Breast epithelium (tissue), 4 donors: ENCODE measurements at regions of chr20 and their contacts with region 1.

Region 1: DNA sequence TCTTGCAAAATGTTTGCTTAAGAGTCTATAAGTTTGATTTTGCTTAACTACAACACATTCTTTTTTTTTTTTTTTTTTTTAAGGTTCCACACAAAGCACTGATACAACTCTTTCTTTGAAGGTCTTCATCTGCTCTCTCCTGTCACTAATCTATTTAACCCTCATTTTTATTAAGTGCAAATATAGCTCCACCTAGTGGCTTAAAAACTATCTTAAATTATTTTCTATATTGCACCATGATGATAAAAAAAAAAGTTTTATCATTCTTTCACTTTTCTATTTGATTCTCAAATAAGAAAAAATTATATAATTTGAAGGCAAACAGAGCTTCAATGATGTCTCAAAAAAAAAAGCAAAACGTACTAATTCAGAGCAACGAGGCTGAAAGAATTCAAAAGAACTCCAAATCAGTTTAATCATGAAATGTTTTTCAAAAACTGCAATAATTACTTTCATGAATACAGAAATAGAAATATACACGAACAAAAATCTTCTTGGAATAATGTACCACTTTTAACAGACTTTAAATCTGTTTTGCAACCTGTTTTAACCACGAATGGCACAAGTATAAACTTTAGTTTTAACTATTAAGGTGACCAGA is 12.8 kb downstream of the ESF1 start:
- DNase-seq: no peak
- H3K4me3 ChIP-seq: no peak overlapping the region
- H3K27ac ChIP-seq: no peak overlapping the region
- H3K4me1 ChIP-seq: no peaks in the 10 kb centered on the region
- H3K27me3 ChIP-seq: no peaks in the 10 kb centered on the region
- CTCF ChIP-seq: peak in 2 of 3 donors; percentile 39 to 41
- POLR2A ChIP-seq: no peak

Region 2: GRCh38 chr20:13119583-13119982 is 652.4 kb before region 1 on chr20:
- intact Hi-C with region 1: loop called (anchors 10 kb)
- DNase-seq: peak in 1 of 2 donors; percentile 24
- H3K4me3 ChIP-seq: no peak overlapping the region
- H3K27ac ChIP-seq: no peak overlapping the region
- H3K4me1 ChIP-seq: no peaks in the 10 kb centered on the region
- H3K27me3 ChIP-seq: no peaks in the 10 kb centered on the region
- CTCF ChIP-seq: peak; percentile 84 to 93 (median 91)
- POLR2A ChIP-seq: no peak

Region 3: DNA sequence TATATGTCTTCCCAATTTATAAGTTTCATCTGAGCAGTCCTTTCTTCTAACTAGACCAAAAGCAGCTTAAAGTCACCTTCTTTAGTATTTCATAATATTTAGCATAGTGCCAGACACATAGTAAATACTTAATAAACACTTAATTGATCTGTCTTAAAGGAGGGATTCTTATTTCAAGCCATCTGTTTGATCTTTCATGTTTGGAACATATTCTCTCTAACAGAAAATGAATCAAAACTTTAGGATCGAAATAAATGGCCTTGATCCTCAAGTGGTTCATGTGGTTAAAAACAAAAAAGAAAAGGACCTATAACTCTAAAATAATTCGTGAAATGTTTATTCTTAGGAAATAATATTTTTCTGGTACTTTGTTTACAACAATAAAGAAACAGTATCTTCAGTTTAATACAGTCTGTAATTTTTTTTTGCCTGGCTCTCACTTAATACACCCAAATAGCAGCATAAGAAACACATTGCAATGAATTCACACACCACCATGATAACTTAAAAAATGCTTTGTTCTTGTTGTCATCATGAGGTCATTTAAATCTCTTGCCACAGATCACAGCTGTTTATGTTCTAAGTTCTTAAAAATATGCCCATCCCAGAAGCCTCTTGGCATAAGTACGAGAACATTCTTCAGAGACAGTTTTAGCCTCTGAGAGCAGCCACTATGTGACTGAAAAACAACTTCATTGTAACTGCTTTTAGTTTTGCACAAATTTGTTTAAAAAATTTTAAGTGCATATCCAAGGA is 35.3 kb before region 1 on chr20:
- intact Hi-C with region 1: loop called (anchors 2 kb)
- DNase-seq: no peak
- H3K4me3 ChIP-seq: no peak overlapping the region
- H3K27ac ChIP-seq: peak overlapping the region; percentile 9 to 10
- H3K4me1 ChIP-seq: no peaks in the 10 kb centered on the region
- H3K27me3 ChIP-seq: no peaks in the 10 kb centered on the region
- CTCF ChIP-seq: no peak
- POLR2A ChIP-seq: no peak

Region 4: GRCh38 chr20:13755809-13756208 is 16.1 kb before region 1 on chr20:
- intact Hi-C with region 1: no loop called
- DNase-seq: no peak
- H3K4me3 ChIP-seq: no peak overlapping the region
- H3K27ac ChIP-seq: no peak overlapping the region
- H3K4me1 ChIP-seq: no peaks in the 10 kb centered on the region
- H3K27me3 ChIP-seq: no peaks in the 10 kb centered on the region
- CTCF ChIP-seq: no peak
- POLR2A ChIP-seq: no peak